ENCODE measurements at regions of chr6 and their contacts with region 1.

Region 1: DNA sequence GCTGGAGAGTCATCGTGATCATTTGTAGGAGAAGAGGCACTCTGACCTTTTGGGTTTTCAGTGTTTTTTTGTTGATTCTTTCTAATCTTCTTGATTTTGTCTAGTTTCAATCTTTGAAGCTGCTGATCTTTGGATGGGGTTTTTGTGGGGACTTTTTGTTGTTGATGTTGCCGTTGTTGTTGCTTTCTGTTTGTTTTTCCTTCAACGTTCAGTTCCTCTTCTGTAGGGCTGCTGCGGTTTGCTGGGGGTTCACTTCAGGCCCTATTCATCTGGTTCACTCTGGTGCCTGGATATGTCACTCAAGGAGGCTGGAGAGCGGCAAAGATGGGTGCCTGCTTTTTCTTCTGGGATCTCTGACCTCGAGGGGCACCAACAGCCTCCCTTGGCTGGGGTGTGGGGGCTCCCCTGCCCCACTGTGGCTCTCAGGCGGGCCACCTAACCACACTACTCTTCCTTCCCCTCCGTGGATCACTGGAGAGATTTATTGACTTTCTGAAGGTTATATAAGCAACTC is 21.5 kb upstream of the TMEM244 start:
- DNase-seq: no peak
- H3K4me3 ChIP-seq: no peak overlapping the region
- H3K4me3 Mint-ChIP-seq: no peak overlapping the region
- H3K27ac Mint-ChIP-seq: no peak overlapping the region
- H3K4me1 ChIP-seq: no peaks in the 10 kb centered on the region
- H3K4me1 Mint-ChIP-seq: no peaks in the 10 kb centered on the region
- H3K27me3 ChIP-seq: no peaks in the 10 kb centered on the region
- H3K27me3 Mint-ChIP-seq: peaks cover 18% of the 10 kb centered on the region
- CTCF ChIP-seq: no peak

Region 2: GRCh38 chr6:129521941-129522630 is 360.5 kb before region 1 on chr6:
- CTCF ChIA-PET with region 1: no interaction called
- POLR2A ChIA-PET with region 1: no interaction called
- intact Hi-C with region 1: loop called (anchors 5 kb)
- DNase-seq: no peak
- H3K4me3 ChIP-seq: no peak overlapping the region
- H3K4me3 Mint-ChIP-seq: no peak overlapping the region
- H3K27ac Mint-ChIP-seq: no peak overlapping the region
- H3K4me1 ChIP-seq: peaks cover 25% of the 10 kb centered on the region
- H3K4me1 Mint-ChIP-seq: peaks cover 12% of the 10 kb centered on the region
- H3K27me3 ChIP-seq: no peaks in the 10 kb centered on the region
- H3K27me3 Mint-ChIP-seq: no peaks in the 10 kb centered on the region
- CTCF ChIP-seq: no peak

Region 3: DNA sequence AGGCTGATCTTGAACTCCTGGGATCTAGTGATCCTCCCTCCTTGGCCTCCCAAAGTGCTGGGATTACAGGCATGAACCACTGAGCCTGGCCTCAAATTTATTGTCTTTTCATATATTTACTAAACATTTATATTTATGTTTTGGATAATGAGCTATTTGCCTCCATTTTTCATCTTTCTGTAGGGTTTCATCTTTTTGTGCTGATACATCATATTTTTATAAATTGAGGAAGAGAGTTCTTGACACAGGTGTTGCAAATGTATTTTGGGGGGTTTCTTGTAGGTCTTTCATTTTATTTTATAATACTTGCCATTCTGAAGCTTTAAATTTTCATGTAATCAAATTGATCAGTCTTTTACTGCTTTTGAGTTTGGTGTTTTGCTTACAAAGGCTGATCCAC is 208.2 kb after region 1 on chr6:
- CTCF ChIA-PET with region 1: no interaction called
- POLR2A ChIA-PET with region 1: no interaction called
- intact Hi-C with region 1: no loop called
- DNase-seq: no peak
- H3K4me3 ChIP-seq: no peak overlapping the region
- H3K4me3 Mint-ChIP-seq: no peak overlapping the region
- H3K27ac Mint-ChIP-seq: no peak overlapping the region
- H3K4me1 ChIP-seq: no peaks in the 10 kb centered on the region
- H3K4me1 Mint-ChIP-seq: no peaks in the 10 kb centered on the region
- H3K27me3 ChIP-seq: no peaks in the 10 kb centered on the region
- H3K27me3 Mint-ChIP-seq: no peaks in the 10 kb centered on the region
- CTCF ChIP-seq: no peak